AG04449 (cell line): ENCODE measurements at regions of chr5 and their contacts with region 1.

Region 1: DNA sequence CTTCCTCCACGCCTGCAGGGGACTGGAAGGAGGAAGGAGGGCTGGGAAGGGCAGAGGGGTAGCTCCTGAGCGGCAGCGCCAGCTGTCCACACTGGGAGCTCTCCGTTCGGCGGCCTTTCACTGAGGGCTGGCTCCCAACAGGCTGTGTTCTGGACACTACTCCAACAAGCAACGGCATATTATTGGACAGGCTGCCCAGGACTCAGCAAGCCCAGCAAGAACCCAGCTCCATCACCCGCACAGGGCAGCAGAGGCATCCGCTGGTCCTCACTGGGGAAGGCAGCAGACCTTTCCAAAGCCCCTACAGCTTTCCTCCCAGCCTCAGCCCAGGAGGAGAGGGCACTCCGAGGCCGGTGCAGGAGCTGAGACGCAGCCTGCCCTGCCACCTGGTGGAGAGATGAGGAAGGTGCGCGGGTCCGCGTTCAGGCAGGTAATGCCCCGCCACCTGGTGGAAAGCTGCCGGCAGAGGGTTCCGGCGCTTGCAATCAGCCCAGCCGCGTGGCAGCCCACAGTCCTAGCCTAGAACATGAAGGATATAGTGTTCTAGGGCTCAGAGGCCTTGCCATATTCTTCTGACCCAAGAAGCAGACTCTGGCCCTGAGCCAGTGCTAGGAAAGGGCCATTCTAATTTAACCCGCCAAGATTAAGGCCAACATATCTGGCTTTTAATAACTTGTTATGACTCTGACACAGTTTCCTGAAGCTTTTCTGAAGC is 74.4 kb downstream of the NRG2 start:
- DNase-seq: no peak
- H3K4me3 ChIP-seq: no peak overlapping the region
- CTCF ChIP-seq: peak; percentile 100

Region 2: DNA sequence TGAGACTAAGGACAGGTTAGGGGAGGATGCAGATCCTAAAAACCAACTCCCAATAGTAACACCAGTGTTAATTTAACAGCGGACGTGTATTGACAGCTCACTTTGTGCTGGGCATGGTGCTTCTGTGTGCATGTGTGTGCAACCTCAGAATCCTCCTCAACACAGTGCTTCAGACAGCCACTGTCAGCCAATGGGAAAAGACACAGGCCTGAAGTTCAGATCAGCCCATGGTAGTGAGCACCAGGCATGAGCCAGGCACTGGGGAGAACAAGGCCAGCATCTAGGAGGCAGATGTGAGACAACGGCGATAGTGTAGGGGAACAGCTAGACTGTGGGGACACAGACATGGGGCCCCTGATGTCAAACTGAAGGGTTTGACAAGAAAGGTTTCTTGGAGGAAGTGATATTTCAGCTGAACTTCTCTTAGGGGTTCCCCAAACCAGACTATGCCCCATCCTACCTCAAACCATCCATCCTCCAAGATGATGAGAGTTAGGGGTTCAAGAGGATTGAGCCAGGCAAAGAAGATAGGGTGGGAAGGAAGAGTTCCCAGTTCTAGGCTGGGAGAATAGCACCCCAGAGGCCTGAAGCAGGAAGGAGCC is 244.6 kb before region 1 on chr5:
- CTCF ChIA-PET with region 1: no interaction called
- POLR2A ChIA-PET with region 1: no interaction called
- DNase-seq: no peak
- H3K4me3 ChIP-seq: no peak overlapping the region
- CTCF ChIP-seq: no peak

Region 3: DNA sequence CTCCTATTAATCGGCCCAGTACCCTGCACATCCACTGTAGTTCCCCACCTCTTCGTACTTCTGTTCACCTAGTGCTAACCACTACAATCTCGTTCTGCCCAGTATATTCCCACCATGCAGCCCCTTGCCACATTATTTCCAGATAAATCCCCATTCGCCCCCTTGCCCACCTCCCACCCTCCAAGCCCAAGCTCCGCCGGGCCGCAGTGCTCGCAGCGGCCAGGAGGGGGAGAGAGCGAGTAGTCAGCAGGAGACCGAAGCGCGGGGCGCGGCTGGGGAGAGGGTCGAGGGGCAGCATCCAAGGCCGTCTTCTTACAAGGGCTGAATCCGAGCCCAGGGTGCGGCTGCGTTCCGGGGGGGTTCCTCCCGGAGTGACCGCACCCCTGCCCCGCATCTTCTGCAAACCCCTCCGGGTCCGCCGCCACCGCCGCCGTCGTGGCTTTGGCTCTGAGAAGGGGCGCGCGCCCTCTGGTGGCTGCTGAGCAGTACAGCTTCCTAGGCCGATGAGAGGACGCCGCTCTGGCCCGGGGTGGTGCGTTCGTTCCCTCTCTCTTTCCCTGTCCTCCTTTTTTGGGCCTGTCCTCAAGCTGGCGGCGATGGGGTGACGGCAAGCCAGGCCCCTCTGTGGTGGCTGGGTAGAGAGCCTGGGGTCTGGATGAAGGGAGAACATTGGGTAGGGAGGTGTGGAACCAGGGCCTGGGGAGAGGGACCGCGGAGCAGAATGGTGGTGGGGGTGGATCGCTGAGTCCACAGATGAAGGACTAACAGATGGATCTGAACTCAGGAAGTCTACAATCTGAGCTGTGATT is 203.1 kb before region 1 on chr5:
- CTCF ChIA-PET with region 1: interaction called, 21 read pairs
- POLR2A ChIA-PET with region 1: no interaction called
- DNase-seq: no peak
- H3K4me3 ChIP-seq: peak overlapping the region; percentile 72
- CTCF ChIP-seq: peak; percentile 87

Region 4: DNA sequence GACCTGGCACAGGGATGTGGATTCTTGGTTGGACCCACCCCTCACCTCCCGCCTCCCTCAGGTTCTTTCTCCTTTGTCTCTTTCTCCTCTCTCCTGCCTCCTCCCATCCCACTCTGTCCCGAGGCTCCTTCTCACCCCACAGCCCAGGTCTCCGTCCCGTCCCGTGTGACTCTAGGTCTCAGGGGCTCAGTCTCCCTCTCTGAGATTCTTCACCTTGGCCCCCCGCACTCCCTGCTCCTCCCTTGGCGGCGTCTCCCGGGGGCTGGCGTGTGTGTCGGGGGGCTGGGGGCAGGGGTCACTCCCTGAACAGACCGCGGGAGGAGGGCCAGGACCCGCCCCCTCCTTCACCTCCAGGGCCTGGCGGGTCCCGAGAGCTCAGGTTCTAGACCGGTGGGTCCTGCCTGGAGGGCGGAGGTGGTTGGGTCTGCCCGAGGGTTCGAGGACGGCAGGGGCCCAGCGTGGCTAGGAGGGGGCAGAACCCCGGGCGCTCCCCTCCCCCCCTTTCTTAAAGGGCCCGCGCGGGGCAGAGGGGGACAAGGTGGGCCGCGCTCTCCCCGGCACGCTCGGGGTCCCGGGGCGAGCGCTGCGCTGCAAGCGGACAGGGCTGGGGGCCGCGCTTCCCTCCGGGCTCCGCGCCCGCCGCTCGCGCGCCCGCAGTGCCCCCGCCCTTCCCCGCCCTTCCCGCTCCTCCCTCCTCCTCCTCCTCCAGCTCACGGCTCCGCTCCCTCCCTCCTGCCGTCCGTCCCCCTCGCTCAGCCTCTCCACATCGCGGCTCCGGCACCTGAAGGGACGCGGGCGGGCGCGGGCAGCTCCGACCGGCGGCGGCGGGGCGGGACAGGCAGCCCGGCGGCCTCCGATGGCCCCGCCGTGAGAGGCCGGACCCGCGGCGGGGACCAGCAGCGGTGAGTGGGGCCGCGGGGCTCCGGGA is 173.4 kb before region 1 on chr5 and contains the start of gene PSD2:
- CTCF ChIA-PET with region 1: interaction called, 457 read pairs
- POLR2A ChIA-PET with region 1: no interaction called
- DNase-seq: no peak
- H3K4me3 ChIP-seq: peak within 1 kb of the TSS; percentile 30
- CTCF ChIP-seq: no peak

Region 5: DNA sequence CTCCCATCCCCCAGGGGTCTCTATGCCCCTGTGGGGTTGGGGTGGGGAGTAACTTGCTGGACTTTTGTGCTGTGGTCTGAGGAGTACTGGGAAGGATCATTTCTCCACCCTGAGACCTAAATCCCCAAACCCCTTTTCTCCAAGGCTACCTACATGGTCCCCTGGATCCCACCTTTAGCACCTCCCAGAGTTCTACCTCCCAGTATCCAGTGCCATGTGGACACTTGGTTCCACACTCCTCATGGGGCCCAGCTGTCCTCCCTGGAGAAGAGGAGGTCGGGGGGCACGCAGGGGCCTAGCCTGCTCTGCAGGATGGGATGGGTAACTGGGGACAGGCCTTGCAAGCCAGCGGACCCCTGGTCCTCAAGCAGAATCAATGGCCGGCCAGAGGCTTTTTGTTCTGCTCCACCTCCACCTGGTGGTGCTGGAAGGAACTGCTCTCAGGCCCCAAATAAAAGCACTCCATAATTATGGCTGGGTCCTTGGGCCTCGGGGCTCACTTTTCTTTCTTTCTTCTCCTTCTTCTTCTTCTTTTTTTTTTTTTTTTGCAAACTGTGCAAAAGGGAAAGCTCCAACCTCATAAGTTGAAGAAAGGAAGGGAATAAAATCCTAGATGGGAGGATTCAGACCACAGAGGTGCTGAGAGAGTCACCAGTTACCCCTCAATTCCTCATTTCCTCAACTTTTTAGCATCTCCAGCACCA is 104.7 kb before region 1 on chr5:
- CTCF ChIA-PET with region 1: interaction called, 21 read pairs
- POLR2A ChIA-PET with region 1: no interaction called
- DNase-seq: no peak
- H3K4me3 ChIP-seq: no peak overlapping the region
- CTCF ChIP-seq: peak; percentile 72

Region 6: GRCh38 chr5:139942243-139942642 is 26.5 kb before region 1 on chr5:
- CTCF ChIA-PET with region 1: interaction called, 13 read pairs
- POLR2A ChIA-PET with region 1: no interaction called
- DNase-seq: no peak
- H3K4me3 ChIP-seq: no peak overlapping the region
- CTCF ChIP-seq: no peak

Region 7: DNA sequence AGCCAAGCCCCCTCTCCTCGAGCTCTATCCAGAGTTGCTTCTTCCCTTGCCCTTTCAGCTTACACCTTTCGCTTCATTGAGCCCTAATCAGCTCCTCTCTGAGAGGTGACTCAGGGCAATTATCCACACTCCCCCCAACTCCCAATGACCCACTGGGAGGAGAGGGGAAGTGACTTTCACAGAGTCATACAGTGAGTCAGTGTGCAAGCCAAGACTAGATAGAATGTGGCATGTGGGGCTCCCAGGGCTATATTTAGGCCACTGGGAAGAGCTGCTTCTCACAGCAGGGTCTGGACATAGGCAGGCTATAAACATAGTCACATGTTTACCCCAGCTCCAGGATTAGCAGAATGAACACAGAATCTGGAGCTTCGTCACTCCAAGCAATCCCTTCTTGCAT is 17.0 kb after region 1 on chr5:
- CTCF ChIA-PET with region 1: interaction called, 148 read pairs
- POLR2A ChIA-PET with region 1: interaction called, 3 read pairs
- DNase-seq: peak; percentile 66
- H3K4me3 ChIP-seq: no peak overlapping the region
- CTCF ChIP-seq: no peak